ENCODE measurements at regions of chr22 and their contacts with region 1.

Region 1: GRCh38 chr22:40757071-40757470 is 62.1 kb downstream of the SLC25A17 start:
- DNase-seq: no peak
- ATAC-seq: no peak
- H3K4me3 ChIP-seq: no peak overlapping the region
- H3K27ac ChIP-seq: no peak overlapping the region
- H3K4me1 ChIP-seq: no peaks in the 10 kb centered on the region
- H3K27me3 ChIP-seq: peaks cover 0 to 2% (median 0%) of the 10 kb centered on the region in 3 donors
- CTCF ChIP-seq: no peak

Region 2: GRCh38 chr22:40426594-40427333 is 330.3 kb before region 1 on chr22:
- intact Hi-C with region 1: loop called in 1 of 2 experiments (anchors 10 kb)
- DNase-seq: peak; percentile 71 to 76
- ATAC-seq: peak; percentile 79 to 90 (median 88)
- H3K4me3 ChIP-seq: no peak overlapping the region
- H3K27ac ChIP-seq: peak overlapping the region; percentile 82
- H3K4me1 ChIP-seq: peaks cover 59% of the 10 kb centered on the region
- H3K27me3 ChIP-seq: no peaks in the 10 kb centered on the region
- CTCF ChIP-seq: no peak

Region 3: DNA sequence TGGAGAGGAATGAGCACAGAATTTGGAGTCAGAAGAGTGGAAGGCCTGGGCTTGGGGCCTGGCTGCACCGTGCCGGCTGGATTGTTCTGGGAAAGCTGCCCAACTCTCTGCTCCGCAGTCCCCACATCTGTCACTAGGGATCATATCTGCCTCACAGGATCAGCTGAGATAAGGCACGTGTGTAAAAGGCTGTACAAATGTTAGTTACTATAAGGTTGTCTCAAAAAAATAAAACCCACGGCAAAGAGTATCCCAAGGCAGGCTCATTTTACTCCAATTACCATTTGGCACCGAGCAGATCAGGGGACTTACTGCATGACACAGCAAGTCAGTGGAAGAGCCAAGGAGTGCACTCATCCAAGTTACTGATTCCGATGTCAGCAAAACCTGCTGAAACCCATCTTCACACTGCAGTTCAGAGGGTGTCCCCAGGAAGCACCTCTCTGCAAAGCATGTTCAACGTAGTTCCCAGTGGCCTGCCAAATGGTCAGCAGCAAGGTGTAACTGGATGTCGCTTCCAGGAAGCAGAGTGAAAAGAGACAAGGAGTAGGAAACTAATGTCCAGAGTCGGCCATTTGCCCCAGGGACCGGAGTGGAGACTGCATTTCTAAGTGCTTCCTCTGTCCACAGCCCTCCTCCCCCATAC is 102.4 kb before region 1 on chr22:
- intact Hi-C with region 1: loop called in 1 of 2 experiments (anchors 5 kb)
- DNase-seq: peak; percentile 66 to 83
- ATAC-seq: peak; percentile 62 to 71 (median 63)
- H3K4me3 ChIP-seq: peak overlapping the region; percentile 26
- H3K27ac ChIP-seq: peak overlapping the region; percentile 96
- H3K4me1 ChIP-seq: peaks cover 38% of the 10 kb centered on the region
- H3K27me3 ChIP-seq: no peaks in the 10 kb centered on the region
- CTCF ChIP-seq: peak; percentile 35

Region 4: DNA sequence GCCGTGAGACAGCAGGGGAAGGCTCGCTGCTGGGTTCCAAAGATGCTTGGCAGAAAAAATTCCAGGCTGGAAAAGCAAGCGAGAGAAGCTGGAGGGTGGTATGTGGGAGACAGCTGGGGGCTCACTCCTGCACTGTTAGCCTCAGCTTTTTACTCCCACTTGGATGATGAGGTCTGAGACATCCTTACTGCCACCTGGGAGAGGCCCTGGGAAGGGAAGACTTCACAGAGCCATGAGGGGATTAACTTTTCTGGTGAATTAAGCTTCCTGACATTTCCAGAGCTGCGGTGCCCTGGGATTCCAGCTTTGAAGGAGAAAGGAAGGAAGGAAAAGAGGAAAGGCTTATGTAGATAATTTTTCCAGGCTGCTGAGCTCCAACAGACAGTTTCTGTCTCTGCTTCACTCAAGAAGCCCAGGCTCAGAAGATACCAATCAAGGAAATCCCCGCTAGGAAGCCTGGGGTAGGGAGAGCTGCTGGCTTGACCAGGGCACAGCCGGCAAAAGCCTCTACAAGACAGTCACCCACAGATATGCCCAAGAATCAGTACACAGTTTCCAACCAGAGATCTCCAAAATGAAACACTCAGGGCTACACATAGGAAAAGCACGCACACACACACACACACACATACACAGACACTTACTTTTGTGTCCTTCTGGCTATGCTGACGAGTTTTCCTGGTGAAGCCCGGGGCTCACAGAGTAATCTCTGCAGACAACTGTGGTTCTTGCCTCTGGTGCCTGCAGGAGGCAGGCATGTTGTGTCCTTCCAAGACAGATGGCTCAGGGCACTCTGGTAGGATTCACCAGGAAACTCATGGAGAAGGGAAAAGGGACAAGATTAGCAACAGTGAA is 76.9 kb before region 1 on chr22:
- intact Hi-C with region 1: loop called in 1 of 2 experiments (anchors 5 kb)
- DNase-seq: no peak
- ATAC-seq: no peak
- H3K4me3 ChIP-seq: peak overlapping the region; percentile 29
- H3K27ac ChIP-seq: no peak overlapping the region
- H3K4me1 ChIP-seq: peaks cover 9% of the 10 kb centered on the region
- H3K27me3 ChIP-seq: peaks cover 0 to 19% (median 6%) of the 10 kb centered on the region in 3 donors
- CTCF ChIP-seq: no peak